OCI-LY7 (cell line): ENCODE measurements at regions of chr12 and their contacts with region 1.

Region 1: DNA sequence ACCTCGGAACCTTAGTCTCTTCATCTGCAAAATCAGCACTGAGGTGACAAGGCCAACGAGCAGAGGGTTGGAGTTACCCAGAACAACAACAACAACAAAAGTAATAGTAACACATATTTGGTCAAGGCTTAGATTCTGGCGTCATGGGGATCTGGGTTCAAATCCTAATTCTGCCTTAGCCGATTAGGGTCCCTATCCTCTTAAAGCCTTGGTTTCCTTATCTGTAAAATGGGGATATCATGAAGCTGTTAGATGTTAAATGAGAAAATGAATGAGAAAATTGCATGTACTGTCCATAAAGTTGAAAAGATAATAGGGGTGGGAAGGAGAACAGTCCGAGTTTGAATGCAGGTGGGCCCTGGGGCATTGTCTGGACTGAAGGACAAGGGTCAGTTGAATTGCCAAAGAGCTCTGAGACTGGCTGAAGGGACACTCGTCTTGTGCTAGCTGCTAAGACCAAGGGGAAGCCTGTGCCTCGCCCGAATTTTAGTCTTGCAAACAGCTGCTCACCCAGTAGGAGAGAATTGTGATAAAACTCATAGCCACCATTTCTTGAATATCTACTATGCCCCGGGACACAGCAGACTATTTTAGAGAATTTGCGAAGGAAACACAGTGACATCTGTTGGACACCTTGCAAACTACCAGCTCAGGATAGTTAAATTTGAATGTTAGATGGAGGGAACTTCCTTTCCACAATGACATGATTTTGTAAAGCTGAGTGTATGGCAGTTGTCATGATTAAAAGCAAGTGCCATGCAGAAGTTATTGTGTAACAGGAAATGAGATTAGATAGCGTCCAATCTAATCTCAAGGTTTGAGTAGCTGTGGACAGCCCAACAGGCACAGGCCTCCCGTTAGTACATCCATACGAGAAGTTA is 6.8 kb upstream of the HNF1A start:
- DNase-seq: peak; percentile 83
- H3K4me3 ChIP-seq: no peak overlapping the region
- H3K27ac ChIP-seq: no peak overlapping the region
- H3K4me1 ChIP-seq: peaks cover 7% of the 10 kb centered on the region
- CTCF ChIP-seq: peak; percentile 95

Region 2: GRCh38 chr12:120649442-120650232 is 321.9 kb before region 1 on chr12:
- CTCF ChIA-PET with region 1: no interaction called
- POLR2A ChIA-PET with region 1: no interaction called
- intact Hi-C with region 1: loop called (anchors 1 kb)
- DNase-seq: no peak
- H3K4me3 ChIP-seq: peak overlapping the region; percentile 30
- H3K27ac ChIP-seq: no peak overlapping the region
- H3K4me1 ChIP-seq: peaks cover 42% of the 10 kb centered on the region
- CTCF ChIP-seq: peak; percentile 58; the same call in 1 of the 2 replicates

Region 3: DNA sequence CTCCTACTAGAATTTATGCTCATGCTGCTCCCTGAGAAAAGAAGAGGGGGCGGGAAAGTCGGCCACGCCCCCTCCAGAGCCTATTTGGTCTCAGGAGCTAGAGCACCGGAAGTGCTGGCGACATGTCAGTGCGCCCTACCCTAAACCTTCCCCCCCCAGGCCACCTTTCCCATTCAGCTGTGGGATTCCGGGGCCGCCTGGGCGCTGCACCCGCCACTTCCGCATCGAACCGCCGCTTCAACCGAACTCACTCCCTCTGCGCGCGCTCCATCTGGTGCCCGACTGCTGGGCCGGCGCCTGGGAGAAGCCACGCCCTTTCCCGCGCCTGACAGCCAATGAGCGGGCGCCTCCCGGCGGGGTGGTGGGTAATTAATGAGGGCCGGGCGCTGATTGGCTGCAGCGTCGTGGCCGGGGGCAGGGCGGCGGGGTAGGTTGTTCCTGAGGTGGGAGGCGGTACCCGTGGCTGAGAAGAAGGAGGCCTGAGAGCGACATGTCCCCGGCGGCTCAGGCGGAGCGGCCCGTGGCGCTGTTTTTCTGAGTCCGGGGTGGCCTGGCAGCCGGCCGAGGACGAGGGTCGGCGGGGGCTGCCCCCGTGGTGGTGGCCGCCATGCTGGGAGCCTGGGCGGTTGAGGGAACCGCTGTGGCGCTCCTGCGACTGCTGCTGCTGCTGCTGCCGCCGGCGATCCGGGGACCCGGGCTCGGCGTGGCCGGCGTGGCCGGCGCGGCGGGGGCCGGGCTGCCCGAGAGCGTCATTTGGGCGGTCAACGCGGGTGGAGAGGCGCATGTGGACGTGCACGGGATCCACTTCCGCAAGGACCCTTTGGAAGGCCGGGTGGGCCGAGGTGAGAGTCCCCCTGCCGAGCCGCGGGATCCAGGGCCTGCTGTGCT is 284.6 kb before region 1 on chr12 and contains the start of gene MLEC:
- CTCF ChIA-PET with region 1: interaction called, 3 read pairs
- POLR2A ChIA-PET with region 1: no interaction called
- intact Hi-C with region 1: loop called (anchors 1 kb)
- DNase-seq: peak; percentile 99
- H3K4me3 ChIP-seq: peak within 1 kb of the TSS; percentile 91
- H3K27ac ChIP-seq: peak within 1 kb of the TSS; percentile 94
- H3K4me1 ChIP-seq: peaks cover 56% of the 10 kb centered on the region
- CTCF ChIP-seq: peak; percentile 65
- total RNA-seq, gene MLEC: 69.7 and 74.1 TPM in 2 replicates

Region 4: GRCh38 chr12:120725659-120726509 is 245.7 kb before region 1 on chr12 and contains the start of gene ACADS:
- CTCF ChIA-PET with region 1: no interaction called
- POLR2A ChIA-PET with region 1: no interaction called
- intact Hi-C with region 1: loop called (anchors 5 kb)
- DNase-seq: peak; percentile 90
- H3K4me3 ChIP-seq: peak within 1 kb of the TSS; percentile 64
- H3K27ac ChIP-seq: no peak within 1 kb of the TSS
- H3K4me1 ChIP-seq: peaks cover 33% of the 10 kb centered on the region
- CTCF ChIP-seq: no peak
- total RNA-seq, gene ACADS: 7.7 and 8.8 TPM in 2 replicates

Region 5: GRCh38 chr12:120737557-120738251 is 233.8 kb before region 1 on chr12:
- CTCF ChIA-PET with region 1: no interaction called
- POLR2A ChIA-PET with region 1: no interaction called
- intact Hi-C with region 1: loop called (anchors 1 kb)
- DNase-seq: peak; percentile 57
- H3K4me3 ChIP-seq: no peak overlapping the region
- H3K27ac ChIP-seq: no peak overlapping the region
- H3K4me1 ChIP-seq: no peaks in the 10 kb centered on the region
- CTCF ChIP-seq: peak; percentile 76

Region 6: DNA sequence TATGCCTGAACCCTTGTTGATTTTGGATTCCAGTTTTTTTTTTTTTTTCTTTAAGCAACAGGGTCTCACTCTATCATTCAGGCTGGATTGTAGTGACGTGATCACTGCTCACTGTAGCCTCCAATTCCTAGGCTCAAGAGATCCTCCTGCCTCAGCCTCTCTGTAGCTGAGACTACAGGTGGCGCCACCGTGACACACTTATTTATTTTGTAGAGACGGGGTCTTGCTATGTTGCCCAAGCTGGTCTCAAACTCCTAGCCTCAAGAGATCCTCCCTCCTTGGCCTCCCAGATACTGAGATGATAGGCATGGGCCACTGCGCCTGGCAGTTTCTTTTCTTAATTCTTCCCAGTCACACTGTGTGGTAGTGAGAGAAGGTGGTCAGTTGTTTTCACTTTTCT is 220.7 kb before region 1 on chr12:
- CTCF ChIA-PET with region 1: no interaction called
- POLR2A ChIA-PET with region 1: no interaction called
- intact Hi-C with region 1: loop called (anchors 5 kb)
- DNase-seq: no peak
- H3K4me3 ChIP-seq: no peak overlapping the region
- H3K27ac ChIP-seq: no peak overlapping the region
- H3K4me1 ChIP-seq: no peaks in the 10 kb centered on the region
- CTCF ChIP-seq: peak; percentile 66

Region 7: DNA sequence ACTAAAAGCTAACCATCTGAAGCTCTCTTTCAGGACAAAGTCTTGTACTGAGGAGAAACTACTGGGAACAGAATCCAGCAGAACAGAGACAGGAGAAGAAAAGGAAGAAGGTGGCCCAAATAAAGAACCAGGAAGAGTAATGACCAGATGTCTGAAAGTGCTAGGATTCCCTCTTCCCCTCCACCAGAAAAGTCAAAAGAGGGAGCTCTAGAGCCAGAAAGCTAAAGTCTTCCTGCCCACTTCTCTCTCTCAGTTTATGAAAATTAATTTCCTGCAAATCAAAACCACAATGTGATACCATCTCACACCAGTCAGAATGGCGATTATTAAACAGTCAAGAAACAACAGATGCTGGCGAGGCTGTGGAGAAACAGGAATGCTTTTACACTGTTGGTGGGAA is 114.6 kb before region 1 on chr12:
- CTCF ChIA-PET with region 1: interaction called, 3 read pairs
- POLR2A ChIA-PET with region 1: interaction called, 4 read pairs
- intact Hi-C with region 1: loop called (anchors 2 kb)
- DNase-seq: peak; percentile 58
- H3K4me3 ChIP-seq: peak overlapping the region; percentile 11
- H3K27ac ChIP-seq: peak overlapping the region; percentile 33
- H3K4me1 ChIP-seq: peaks cover 46% of the 10 kb centered on the region
- CTCF ChIP-seq: peak; percentile 81

Region 8: DNA sequence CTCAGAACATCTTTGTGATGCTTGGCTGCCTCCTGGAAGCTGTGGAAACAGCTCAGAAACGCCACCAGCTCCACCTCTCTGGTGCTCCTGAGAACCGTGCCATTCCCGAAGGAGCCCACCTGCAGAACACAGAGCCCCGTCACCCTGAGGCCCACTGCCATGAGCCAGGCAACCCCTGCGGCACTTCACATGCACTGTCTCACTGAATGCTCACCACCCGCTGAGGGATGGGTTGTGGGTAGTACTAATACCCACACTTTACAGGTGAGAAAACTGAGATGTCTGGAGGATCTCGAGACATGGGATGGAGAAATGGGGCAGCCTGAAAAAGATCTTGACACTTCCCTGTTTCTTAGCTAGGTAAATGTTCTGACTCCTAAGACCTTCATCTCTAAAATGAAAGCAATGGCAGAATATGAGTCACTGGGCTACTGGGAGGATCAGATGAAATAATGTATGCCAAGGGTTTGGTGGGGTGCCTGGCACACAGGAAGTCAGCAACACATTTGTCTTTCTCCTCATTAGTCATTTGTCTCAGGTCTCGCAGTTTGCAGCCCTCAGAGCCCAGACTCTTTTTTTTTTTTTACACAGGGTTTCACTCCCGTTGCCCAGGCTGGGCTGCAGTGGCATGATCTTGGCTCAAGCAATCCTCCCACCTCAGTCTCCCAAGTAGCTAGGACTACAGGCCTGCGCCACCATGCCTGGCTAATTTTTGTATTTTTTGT is 62.2 kb after region 1 on chr12:
- CTCF ChIA-PET with region 1: no interaction called
- POLR2A ChIA-PET with region 1: no interaction called
- intact Hi-C with region 1: no loop called
- DNase-seq: no peak
- H3K4me3 ChIP-seq: no peak overlapping the region
- H3K27ac ChIP-seq: no peak overlapping the region
- H3K4me1 ChIP-seq: peaks cover 6% of the 10 kb centered on the region
- CTCF ChIP-seq: no peak